BJ (cell line): ENCODE measurements at regions of chr12 and their contacts with region 1.

Region 1: GRCh38 chr12:49866859-49867579 is 24.1 kb upstream of the BCDIN3D start:
- DNase-seq: no peak
- H3K4me3 ChIP-seq: no peak overlapping the region
- H3K27me3 ChIP-seq: peaks cover 4% of the 10 kb centered on the region; the same call in 1 of the 2 replicates
- CTCF ChIP-seq: peak; percentile 97

Region 2: GRCh38 chr12:49842519-49843352 is 24.3 kb before region 1 on chr12 and contains the start of gene BCDIN3D:
- CTCF ChIA-PET with region 1: interaction called, 37 read pairs
- POLR2A ChIA-PET with region 1: no interaction called
- DNase-seq: peak; percentile 52
- H3K4me3 ChIP-seq: peak within 1 kb of the TSS; percentile 80
- H3K27me3 ChIP-seq: no peaks in the 10 kb centered on the region
- CTCF ChIP-seq: no peak
- polyA plus RNA-seq, gene BCDIN3D: 2.6 and 3.5 TPM in 2 replicates

Region 3: GRCh38 chr12:49901026-49901425 is 34.0 kb after region 1 on chr12:
- CTCF ChIA-PET with region 1: interaction called, 10 read pairs
- POLR2A ChIA-PET with region 1: no interaction called
- DNase-seq: no peak
- H3K4me3 ChIP-seq: no peak overlapping the region
- H3K27me3 ChIP-seq: peaks cover 15% of the 10 kb centered on the region
- CTCF ChIP-seq: no peak

Region 4: DNA sequence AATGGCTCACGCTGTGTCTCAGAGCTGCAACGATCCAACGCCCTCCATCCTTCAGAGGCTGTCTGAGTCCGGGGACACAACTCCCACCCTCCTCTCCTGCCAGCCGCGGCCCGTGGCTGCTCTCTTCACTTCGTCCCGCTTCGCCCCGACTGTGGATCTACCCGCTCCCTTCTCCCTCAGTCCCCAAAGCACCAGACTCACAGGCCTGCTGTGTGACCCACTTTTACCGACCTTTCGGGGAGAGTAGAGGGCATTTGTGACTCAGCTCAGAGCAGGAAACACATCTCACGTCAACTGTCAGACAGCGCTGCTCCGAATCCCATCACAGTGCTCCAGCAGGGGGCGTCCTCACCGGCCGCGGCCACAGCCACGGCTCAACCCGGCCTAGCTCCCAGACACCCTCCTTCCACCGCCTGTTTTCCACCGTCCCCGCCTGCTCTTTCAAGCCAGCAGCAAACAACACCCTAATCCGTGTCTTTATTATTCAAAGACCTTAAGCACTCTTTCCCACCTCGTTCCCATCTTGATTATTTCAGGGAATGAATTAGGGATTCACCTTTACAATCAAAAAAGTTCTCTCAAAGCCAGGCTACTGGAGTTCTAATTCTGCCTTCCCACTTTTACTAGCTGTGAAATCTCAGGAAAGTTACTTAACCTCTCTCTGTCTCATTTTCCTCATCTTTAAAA is 78.5 kb after region 1 on chr12:
- CTCF ChIA-PET with region 1: interaction called, 30 read pairs
- POLR2A ChIA-PET with region 1: no interaction called
- DNase-seq: peak; percentile 9
- H3K4me3 ChIP-seq: no peak overlapping the region
- H3K27me3 ChIP-seq: peaks cover 5% of the 10 kb centered on the region
- CTCF ChIP-seq: peak; percentile 93

Region 5: DNA sequence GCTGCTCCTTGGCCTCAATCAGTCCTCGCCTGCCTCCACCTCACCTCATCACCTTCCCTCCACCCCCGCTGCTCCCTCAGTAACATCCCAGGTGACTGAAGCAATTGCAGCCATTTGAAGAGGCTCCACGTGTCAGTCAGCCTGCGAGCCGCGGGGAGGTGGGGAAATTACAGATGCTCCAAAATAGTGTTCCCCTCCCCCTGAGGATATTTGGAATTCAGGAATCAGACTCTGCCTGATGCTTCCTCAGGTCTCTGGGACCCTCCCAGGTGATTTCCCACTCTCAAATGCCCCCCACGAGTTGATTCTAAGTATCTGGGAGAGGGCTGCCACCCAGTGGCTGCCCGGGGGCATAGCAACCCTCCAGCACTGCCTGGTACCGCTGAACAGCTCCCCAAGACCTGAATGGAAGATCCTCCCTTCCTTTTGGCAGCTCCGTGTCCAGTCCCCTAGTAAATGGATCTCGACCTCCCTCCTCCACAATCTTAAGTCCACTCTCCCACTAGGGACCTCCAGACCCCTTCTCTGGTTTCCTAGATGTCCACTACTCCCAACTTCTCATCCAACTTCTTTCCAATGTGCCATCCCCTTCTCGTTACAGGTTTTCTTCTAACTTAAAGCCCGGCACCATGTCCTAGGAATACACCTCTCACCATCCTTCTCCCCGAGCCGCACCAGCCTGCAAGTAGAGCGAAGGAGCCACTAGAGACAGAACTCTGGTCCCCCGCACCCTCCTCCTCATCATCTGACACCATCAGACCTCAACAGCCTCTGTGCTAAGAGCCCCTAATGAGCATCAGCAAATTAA is 189.0 kb after region 1 on chr12:
- CTCF ChIA-PET with region 1: interaction called, 24 read pairs
- POLR2A ChIA-PET with region 1: no interaction called
- DNase-seq: no peak
- H3K4me3 ChIP-seq: no peak overlapping the region
- H3K27me3 ChIP-seq: peaks cover 21% of the 10 kb centered on the region
- CTCF ChIP-seq: peak; percentile 98